Esophagus muscularis mucosa (tissue), 4 donors: ENCODE measurements at regions of chr21 and their contacts with region 1.

Region 1: GRCh38 chr21:46022551-46023525 is 41.3 kb downstream of the COL6A1 start:
- DNase-seq: no peak
- H3K4me3 ChIP-seq: peak overlapping the region in 1 of 4 donors; percentile 30
- H3K27ac ChIP-seq: peak overlapping the region; percentile 84 to 90 (median 84)
- H3K4me1 ChIP-seq: peaks cover 27 to 87% (median 79%) of the 10 kb centered on the region in 4 donors
- H3K27me3 ChIP-seq: no peaks in the 10 kb centered on the region
- CTCF ChIP-seq: no peak
- EP300 ChIP-seq: no peak
- POLR2A ChIP-seq: no peak

Region 2: GRCh38 chr21:45970674-45971615 is 51.9 kb before region 1 on chr21:
- intact Hi-C with region 1: no loop called
- DNase-seq: no peak
- H3K4me3 ChIP-seq: no peak overlapping the region
- H3K27ac ChIP-seq: peak overlapping the region; percentile 96 to 99 (median 98)
- H3K4me1 ChIP-seq: peaks cover 50 to 61% (median 59%) of the 10 kb centered on the region in 4 donors
- H3K27me3 ChIP-seq: no peaks in the 10 kb centered on the region
- CTCF ChIP-seq: peak; percentile 94 to 99 (median 97)
- EP300 ChIP-seq: no peak
- POLR2A ChIP-seq: no peak

Region 3: DNA sequence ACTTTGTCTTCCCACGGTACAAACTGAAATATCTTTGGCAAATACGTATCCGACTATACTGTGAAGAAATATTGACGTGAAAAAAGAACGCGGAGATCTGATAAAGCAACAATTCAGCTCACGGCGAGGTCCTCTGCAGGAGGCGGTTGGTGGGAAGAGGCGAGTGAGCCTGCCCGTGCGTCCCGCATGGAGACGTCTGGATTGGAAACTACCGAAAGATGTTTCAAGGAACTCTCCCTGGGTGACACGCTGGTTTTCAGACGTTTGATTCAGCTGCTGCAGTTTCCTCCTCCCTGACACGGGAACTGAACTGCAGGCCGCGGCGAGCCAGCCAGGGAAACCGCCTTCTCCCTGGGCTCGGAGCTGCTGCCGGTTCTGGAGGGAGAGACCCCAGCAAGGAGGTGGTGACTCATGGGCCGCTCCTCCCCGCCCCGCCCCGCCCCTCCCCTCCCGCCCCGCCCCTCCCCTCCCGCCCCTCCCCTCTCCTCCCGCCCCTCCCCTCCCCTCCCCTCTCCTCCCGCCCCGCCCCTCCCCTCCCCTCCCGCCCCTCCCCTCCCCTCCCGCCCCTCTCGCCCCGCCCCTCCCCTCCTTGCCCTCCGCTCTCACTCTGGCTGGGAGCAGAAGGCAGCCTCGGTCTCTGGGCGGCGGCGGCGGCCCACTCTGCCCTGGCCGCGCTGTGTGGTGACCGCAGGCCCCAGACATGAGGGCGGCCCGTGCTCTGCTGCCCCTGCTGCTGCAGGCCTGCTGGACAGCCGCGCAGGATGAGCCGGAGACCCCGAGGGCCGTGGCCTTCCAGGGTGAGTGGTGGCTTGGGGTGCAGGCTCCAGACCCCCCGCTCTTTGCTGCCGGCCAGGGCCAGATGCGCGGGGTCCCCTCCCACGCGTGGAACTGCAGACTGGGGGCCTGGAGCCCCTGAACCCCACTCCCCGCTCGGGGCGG is 41.4 kb before region 1 on chr21 and contains the start of gene COL6A1:
- intact Hi-C with region 1: loop called (anchors 5 kb)
- DNase-seq: peak; percentile 96
- H3K4me3 ChIP-seq: peak within 1 kb of the TSS; percentile 70 to 88 (median 78)
- H3K27ac ChIP-seq: peak within 1 kb of the TSS; percentile 96 to 99 (median 98)
- H3K4me1 ChIP-seq: peaks cover 51 to 82% (median 78%) of the 10 kb centered on the region in 4 donors
- H3K27me3 ChIP-seq: no peaks in the 10 kb centered on the region
- CTCF ChIP-seq: no peak
- EP300 ChIP-seq: no peak
- POLR2A ChIP-seq: peak; percentile 74
- total RNA-seq, gene COL6A1: 646 to 1,432 (median 1,078) TPM

Region 4: GRCh38 chr21:46056450-46056903 is 33.6 kb after region 1 on chr21:
- intact Hi-C with region 1: loop called (anchors 5 kb)
- DNase-seq: peak; percentile 95
- H3K4me3 ChIP-seq: peak overlapping the region in 3 of 4 donors; percentile 33 to 43 (median 37)
- H3K27ac ChIP-seq: peak overlapping the region; percentile 94 to 99 (median 96)
- H3K4me1 ChIP-seq: peaks cover 39 to 67% (median 56%) of the 10 kb centered on the region in 4 donors
- H3K27me3 ChIP-seq: peaks cover 0 to 5% (median 0%) of the 10 kb centered on the region in 4 donors
- CTCF ChIP-seq: no peak
- EP300 ChIP-seq: peak; percentile 69
- POLR2A ChIP-seq: peak; percentile 42

Region 5: DNA sequence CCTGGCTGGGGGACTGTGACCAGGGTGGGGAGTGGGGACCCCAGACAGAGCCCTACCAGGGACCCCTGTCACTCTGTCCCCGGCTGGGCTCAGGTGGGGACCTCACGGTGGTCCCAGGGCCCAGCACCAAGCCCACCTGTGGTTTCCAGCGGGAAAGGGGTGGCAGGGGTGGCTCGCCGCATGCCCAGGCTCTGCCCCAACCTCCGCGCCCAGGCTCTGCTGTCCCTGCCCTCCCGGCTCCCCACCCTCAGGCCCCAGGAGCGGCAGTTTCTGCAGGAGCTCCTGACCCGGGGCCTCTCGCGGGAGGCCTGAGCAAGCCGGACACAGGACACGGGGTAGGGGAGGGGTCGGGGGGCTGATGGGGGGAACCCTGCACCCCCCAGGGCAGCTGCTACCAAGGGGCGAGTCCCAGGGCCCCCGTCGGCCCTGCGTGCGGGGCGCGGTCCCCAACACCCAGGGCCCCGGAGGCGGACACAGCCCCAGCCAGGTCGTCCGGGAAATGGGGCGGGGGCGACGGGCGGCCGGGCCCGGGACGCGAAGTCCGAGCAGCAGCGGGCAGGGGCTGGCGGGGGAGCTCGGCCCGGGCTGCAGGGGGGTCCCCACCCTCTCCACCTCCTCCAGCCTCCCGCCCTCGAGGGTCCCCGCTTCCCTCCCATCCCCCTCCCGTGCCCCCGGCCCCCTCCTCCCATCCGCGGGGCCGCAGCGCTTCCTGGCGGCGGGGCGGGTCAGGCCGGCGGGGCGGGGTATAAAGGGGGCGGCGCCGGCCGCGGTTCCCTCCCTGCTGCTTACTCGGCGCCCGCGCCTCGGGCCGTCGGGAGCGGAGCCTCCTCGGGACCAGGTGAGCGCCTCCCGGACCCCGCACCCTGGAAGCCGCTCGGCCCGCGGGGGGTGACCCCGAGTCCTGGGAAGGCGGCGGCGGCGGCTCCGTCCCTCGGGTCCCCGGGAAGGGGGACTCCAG is 74.8 kb after region 1 on chr21 and contains the start of gene COL6A2:
- intact Hi-C with region 1: no loop called
- DNase-seq: peak; percentile 92
- H3K4me3 ChIP-seq: peak within 1 kb of the TSS; percentile 81 to 97 (median 94)
- H3K27ac ChIP-seq: peak within 1 kb of the TSS; percentile 99 to 100 (median 99)
- H3K4me1 ChIP-seq: peaks cover 24 to 73% (median 71%) of the 10 kb centered on the region in 4 donors
- H3K27me3 ChIP-seq: peaks cover 0 to 8% (median 0%) of the 10 kb centered on the region in 4 donors
- CTCF ChIP-seq: peak; percentile 54 to 70 (median 60)
- EP300 ChIP-seq: no peak
- POLR2A ChIP-seq: peak; percentile 83
- total RNA-seq, gene COL6A2: 942 to 1,525 (median 1,202) TPM